Endothelial cell of umbilical vein (primary cell): ENCODE measurements at regions of chr6 and their contacts with region 1.

Region 1: DNA sequence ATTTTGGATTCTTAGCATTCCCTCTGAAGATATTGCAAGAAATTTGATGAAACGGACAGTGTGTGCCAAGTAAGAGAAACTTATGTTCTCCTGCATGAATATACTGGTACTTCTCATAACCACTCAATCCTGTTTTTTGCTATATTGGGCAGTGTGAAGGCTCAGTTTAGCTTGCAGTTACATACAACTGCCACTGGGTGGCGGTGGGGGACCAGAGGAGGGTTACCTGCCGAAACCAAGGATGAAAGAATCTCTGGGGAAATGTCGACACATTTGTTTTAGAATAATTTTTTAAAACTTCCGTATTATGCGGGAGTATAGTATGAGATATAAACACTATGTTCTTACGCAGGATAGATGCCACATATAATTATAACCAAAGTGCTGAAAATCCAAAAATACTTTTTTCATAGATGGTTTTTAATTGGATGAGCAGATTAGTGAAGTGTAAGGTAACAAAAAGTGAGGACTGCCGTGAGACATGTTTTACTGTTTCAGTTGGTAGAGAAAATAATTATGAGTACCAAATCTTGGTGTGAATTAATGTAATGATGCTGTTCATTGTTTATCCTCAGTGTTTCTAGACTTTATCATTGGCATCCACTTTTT is 9.7 kb downstream of the TRMT11 start:
- DNase-seq: peak; percentile 74
- H3K4me3 ChIP-seq: no peak overlapping the region
- H3K27ac ChIP-seq: no peak overlapping the region
- H3K4me1 ChIP-seq: no peaks in the 10 kb centered on the region
- H3K27me3 ChIP-seq: no peaks in the 10 kb centered on the region
- CTCF ChIP-seq: peak; percentile 84 to 97
- POLR2A ChIP-seq: no peak

Region 2: GRCh38 chr6:124002377-124003081 is 1993.5 kb before region 1 on chr6:
- CTCF ChIA-PET with region 1: no interaction called
- POLR2A ChIA-PET with region 1: no interaction called
- dilution Hi-C with region 1: no loop called
- intact Hi-C with region 1: no loop called
- DNase-seq: no peak
- H3K4me3 ChIP-seq: no peak overlapping the region
- H3K27ac ChIP-seq: no peak overlapping the region
- H3K4me1 ChIP-seq: no peaks in the 10 kb centered on the region
- H3K27me3 ChIP-seq: no peaks in the 10 kb centered on the region
- CTCF ChIP-seq: no peak
- POLR2A ChIP-seq: no peak

Region 3: DNA sequence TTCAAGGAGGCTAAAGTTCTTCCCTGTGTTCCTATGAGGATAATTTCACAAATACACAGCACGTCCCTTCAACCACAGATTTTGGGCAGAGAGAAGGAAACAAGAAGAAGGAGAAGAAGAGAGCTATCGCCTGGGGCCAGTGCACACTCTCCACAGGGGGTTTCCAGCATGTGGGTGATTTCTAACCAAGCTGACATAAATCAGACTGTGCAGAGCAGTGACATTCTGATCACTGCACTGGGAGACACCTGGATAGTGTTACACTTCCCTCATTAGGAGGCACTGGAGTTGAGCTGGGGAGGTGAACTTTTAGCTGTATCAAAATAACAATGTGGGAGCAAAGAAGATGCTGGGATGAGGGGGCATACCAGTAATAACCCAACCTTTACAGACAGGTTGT is 272.0 kb after region 1 on chr6:
- CTCF ChIA-PET with region 1: no interaction called
- POLR2A ChIA-PET with region 1: no interaction called
- dilution Hi-C with region 1: no loop called
- intact Hi-C with region 1: loop called (anchors 5 kb)
- DNase-seq: no peak
- H3K4me3 ChIP-seq: no peak overlapping the region
- H3K27ac ChIP-seq: no peak overlapping the region
- H3K4me1 ChIP-seq: peaks cover 25% of the 10 kb centered on the region
- H3K27me3 ChIP-seq: no peaks in the 10 kb centered on the region
- CTCF ChIP-seq: no peak
- POLR2A ChIP-seq: no peak